ENCODE measurements at regions of chr2 and their contacts with region 1.

Region 1: GRCh38 chr2:25127646-25128045 is 40.7 kb downstream of the POMC start:
- DNase-seq: no peak
- H3K4me3 ChIP-seq: no peak overlapping the region
- H3K27ac ChIP-seq: peak overlapping the region; percentile 20
- H3K4me1 ChIP-seq: peaks cover 10% of the 10 kb centered on the region
- H3K27me3 ChIP-seq: no peaks in the 10 kb centered on the region
- CTCF ChIP-seq: no peak
- POLR2A ChIP-seq: no peak

Region 2: DNA sequence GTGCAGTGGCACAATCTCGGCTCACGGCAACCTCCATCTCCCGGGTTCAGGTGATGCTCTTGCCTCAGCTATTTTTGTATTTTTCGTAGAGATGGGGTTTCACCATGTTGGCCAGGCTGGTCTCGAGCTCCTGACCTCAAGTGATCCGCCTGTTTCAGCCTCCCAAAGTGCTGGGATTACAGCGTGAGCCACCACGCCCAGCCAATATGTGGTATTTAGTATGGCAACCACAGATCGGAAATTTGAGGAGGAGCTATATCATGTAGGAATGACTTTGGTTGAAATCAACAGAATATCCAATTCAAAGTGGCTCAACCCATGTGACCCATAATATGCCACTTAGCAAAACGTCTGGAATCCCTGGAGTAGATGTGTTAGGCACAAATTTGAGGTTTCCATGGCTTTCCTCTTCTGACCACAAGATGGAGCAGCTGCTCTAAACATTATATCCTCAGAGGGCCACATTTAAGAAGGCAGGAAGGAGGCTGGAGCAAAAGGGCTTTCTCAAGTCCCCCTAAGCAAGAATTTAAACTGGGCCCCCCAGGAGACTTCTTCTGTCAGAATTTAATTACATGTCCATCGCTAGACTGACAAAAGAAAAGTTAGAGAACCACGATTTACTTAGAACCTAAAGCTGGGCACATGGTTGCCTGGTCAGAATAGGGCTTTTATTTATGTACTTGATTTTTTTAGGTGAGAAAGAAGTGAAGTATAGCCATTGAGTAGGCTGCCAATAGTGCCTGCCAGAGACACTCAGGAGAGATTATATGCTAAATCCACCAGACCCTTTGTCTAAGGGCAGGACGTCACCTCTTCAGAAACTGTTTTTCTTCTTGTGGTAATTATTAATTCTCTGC is 717.7 kb before region 1 on chr2:
- intact Hi-C with region 1: loop called (anchors 10 kb)
- DNase-seq: no peak
- H3K4me3 ChIP-seq: no peak overlapping the region
- H3K27ac ChIP-seq: no peak overlapping the region
- H3K4me1 ChIP-seq: no peaks in the 10 kb centered on the region
- H3K27me3 ChIP-seq: no peaks in the 10 kb centered on the region
- CTCF ChIP-seq: peak; percentile 80 to 89 (median 83)
- POLR2A ChIP-seq: no peak

Region 3: DNA sequence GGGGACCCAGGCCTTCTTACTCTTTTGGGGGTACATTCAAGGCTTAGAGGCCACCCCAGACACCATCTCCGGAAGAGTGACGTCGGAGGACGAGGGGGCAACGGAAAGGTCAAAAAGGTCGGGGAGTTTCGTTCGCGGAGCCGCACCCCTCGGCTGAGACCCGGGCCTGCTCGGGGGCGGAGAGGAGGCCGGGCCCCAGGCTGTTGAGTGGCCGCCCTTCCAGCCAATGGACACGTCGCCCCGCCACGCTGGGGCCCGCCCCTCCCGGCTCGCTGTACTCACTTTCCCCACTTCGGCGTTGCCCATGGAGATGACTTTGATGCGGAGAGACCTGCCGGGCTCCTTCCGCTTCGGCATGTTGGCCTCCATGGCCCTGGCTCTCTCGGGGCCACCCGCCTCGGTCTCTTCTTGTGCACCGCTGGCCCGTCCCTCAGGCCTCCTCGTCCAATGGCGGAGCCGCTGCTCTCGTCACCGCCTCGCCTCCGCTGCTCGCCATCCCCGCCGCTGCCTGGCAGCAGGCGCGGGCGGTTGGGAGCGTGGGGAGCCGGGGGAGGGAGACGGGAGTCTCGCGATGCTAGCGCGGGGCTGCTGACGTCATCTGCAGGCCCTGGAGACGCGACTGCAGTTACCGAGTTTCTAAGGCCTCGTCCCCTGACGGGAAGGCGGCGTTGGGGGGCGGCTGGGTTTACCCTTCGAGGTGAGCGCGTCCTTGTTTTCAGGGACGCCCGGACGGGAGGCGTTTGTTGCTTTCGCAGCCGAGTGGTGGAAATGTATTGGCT is 155.9 kb before region 1 on chr2 and contains the start of gene DNAJC27:
- intact Hi-C with region 1: loop called (anchors 2 kb)
- DNase-seq: peak; percentile 98 to 99
- H3K4me3 ChIP-seq: peak within 1 kb of the TSS; percentile 79 to 90
- H3K27ac ChIP-seq: peak within 1 kb of the TSS; percentile 99
- H3K4me1 ChIP-seq: peaks cover 6% of the 10 kb centered on the region
- H3K27me3 ChIP-seq: no peaks in the 10 kb centered on the region
- CTCF ChIP-seq: no peak
- POLR2A ChIP-seq: peak in 1 of 2 donors; percentile 97
- total RNA-seq, gene DNAJC27: 11.3 TPM

Region 4: GRCh38 chr2:25103287-25103871 is 24.3 kb before region 1 on chr2:
- intact Hi-C with region 1: no loop called
- DNase-seq: no peak
- H3K4me3 ChIP-seq: no peak overlapping the region
- H3K27ac ChIP-seq: no peak overlapping the region
- H3K4me1 ChIP-seq: no peaks in the 10 kb centered on the region
- H3K27me3 ChIP-seq: no peaks in the 10 kb centered on the region
- CTCF ChIP-seq: no peak
- POLR2A ChIP-seq: no peak

Measured in vagina (tissue), 2 donors.